Esophagus squamous epithelium (tissue), 5 donors: ENCODE measurements at regions of chr4 and their contacts with region 1.

Region 1: DNA sequence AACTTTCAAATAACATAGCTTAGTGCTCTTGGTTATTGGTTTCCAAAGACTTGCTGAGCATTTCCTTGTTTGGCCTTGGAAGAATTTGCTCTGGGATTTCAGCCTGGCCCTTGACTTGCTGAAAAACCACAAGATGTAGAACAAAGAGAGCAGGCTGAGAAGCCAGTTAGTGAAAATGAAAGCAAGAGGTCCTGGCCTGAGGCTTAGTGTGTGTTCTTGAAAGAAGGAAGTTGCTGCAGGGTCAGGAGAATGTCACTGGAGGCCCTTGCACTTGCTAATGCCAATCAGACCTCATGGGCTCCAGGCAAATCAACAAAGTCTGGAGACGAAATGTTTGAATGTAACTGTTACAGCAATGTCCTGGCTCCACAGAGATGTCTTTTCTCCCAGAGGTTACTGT is 79.4 kb downstream of the SYNPO2 start:
- DNase-seq: peak; percentile 9
- H3K4me3 ChIP-seq: no peak overlapping the region
- H3K27ac ChIP-seq: peak overlapping the region; percentile 64 to 70 (median 68)
- H3K4me1 ChIP-seq: peaks cover 9 to 67% (median 21%) of the 10 kb centered on the region in 3 donors
- H3K27me3 ChIP-seq: no peaks in the 10 kb centered on the region
- CTCF ChIP-seq: no peak
- POLR2A ChIP-seq: no peak

Region 2: DNA sequence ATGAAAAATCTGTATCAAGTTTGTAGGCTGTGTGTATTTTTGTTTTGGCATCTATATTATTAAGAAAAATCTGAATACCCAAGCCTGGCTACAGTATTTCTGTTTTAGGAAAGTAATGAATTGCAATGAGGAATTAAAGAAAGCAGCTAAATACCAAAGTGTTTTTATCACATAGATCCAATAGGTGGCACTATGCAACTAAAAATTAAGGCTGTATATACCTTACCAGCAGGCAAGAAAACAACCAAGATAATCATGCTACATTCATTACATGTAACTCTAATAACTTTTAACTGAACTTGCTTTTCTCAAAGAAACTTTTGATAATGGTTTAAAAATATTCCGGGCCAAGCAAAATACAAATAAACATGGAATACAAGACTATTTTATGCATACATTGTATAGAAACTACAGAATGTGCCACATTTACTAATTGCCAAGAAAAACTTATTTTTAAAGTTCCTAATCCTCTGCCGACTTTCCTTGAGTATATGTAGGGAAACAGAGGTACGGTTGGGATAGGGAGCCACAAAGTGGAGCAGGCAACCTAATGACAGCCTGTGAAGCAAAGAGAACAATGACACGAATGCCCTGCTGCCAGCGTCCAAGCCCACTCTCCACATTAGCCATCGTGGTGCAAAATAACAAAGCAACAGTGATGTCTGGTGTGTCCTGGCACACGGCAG is 195.8 kb before region 1 on chr4:
- intact Hi-C with region 1: loop called (anchors 10 kb)
- DNase-seq: no peak
- H3K4me3 ChIP-seq: peak overlapping the region in 2 of 4 donors; percentile 2 to 10
- H3K27ac ChIP-seq: peak overlapping the region; percentile 17 to 84 (median 51)
- H3K4me1 ChIP-seq: peaks cover 0 to 70% (median 24%) of the 10 kb centered on the region in 3 donors
- H3K27me3 ChIP-seq: no peaks in the 10 kb centered on the region
- CTCF ChIP-seq: peak; percentile 23 to 76 (median 56)
- POLR2A ChIP-seq: no peak

Region 3: GRCh38 chr4:118835571-118836300 is 132.3 kb before region 1 on chr4 and contains the start of gene SEC24D:
- intact Hi-C with region 1: no loop called
- DNase-seq: peak; percentile 9
- H3K4me3 ChIP-seq: peak within 1 kb of the TSS; percentile 88 to 97 (median 90)
- H3K27ac ChIP-seq: peak within 1 kb of the TSS; percentile 89 to 99 (median 96)
- H3K4me1 ChIP-seq: peaks cover 0 to 44% (median 3%) of the 10 kb centered on the region in 3 donors
- H3K27me3 ChIP-seq: no peaks in the 10 kb centered on the region
- CTCF ChIP-seq: peak in 2 of 6 experiments; percentile 25 to 42
- POLR2A ChIP-seq: peak in 3 of 4 donors; percentile 65 to 91 (median 75)
- total RNA-seq, gene SEC24D: 18.5 to 33.6 (median 21.6) TPM

Region 4: GRCh38 chr4:118898684-118899138 is 69.3 kb before region 1 on chr4:
- intact Hi-C with region 1: loop called (anchors 10 kb)
- DNase-seq: no peak
- H3K4me3 ChIP-seq: no peak overlapping the region
- H3K27ac ChIP-seq: peak overlapping the region in 3 of 4 donors; percentile 68 to 83 (median 81)
- H3K4me1 ChIP-seq: peaks cover 0 to 28% (median 0%) of the 10 kb centered on the region in 3 donors
- H3K27me3 ChIP-seq: no peaks in the 10 kb centered on the region
- CTCF ChIP-seq: no peak
- POLR2A ChIP-seq: no peak

Region 5: GRCh38 chr4:119087121-119087520 is 119.1 kb after region 1 on chr4:
- intact Hi-C with region 1: no loop called
- DNase-seq: no peak
- H3K4me3 ChIP-seq: no peak overlapping the region
- H3K27ac ChIP-seq: no peak overlapping the region
- H3K4me1 ChIP-seq: peaks cover 0 to 2% (median 0%) of the 10 kb centered on the region in 3 donors
- H3K27me3 ChIP-seq: no peaks in the 10 kb centered on the region
- CTCF ChIP-seq: peak in 4 of 6 experiments; percentile 17 to 61 (median 24)
- POLR2A ChIP-seq: no peak